Posterior cingulate gyrus (tissue), 11 donors: ENCODE measurements at regions of chrX and their contacts with region 1.

Region 1: GRCh38 chrX:136028251-136028984 is 43.2 kb downstream of the SLC9A6 start:
- DNase-seq: no peak

Region 2: GRCh38 chrX:135632353-135632752 is 396.1 kb before region 1 on chrX:
- intact Hi-C with region 1: no loop called
- DNase-seq: no peak

Region 3: DNA sequence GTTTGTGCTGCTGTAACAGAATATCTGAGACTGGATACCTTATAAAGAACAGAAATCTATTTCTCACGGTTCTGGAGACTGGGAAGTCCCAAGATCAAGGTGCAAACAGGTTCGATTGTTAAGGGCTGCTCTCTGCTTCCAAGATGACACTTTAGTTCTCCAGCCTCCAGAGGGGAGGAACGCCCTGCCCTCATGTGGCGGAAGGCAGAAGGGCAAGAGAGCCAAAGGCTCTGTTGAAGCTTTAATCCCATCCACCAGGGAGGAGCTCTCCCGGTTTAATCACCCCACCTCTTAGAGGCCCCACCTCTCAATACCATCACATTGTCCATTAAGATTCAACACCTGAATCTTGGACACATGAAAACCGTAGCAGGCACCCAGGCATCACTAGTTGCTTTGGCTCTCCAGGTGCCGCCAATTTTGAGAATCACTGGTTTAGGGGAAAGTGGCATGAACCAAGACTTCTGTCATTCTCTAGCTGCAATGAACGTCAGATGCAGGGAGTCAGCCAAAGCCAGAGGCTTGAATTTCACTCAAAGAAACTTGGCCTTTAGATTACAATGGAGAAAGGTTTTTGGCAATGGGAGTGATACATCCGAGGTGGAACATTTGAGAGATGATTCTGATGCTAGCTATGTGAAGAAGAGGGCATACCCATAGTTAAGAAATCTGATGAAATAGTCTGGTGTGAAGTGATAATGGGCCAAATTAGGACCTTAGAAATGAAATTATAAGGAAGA is 134.6 kb after region 1 on chrX:
- intact Hi-C with region 1: loop called (anchors 2 kb)
- DNase-seq: peak in 4 of 10 donors; percentile 27 to 88 (median 35)

Region 4: DNA sequence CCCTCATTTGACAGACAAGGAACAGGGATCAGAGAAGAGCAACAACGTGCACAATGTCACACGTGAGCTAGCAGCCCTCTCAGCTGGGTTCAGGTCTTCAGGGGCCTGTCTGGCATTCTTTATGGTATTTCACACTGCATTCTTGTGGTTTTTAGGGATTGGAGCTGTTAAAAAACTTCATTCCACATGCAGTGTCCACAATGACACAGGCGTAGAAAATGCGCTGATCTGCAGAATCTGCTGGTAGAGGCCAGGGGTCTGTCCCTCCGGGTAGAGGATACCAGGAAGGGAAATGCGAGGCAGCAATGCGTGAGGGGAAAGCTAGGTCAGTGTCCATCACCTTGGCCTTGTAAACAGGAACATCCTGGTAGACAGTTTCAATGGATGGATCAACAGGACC is 186.1 kb after region 1 on chrX:
- intact Hi-C with region 1: loop called (anchors 5 kb)
- DNase-seq: no peak

Region 5: GRCh38 chrX:136268051-136269048 is 239.9 kb after region 1 on chrX:
- intact Hi-C with region 1: loop called (anchors 2 kb)
- DNase-seq: peak in 4 of 10 donors; percentile 12 to 40 (median 28)